Naive thymus-derived CD4-positive, alpha-beta T cell (primary cell): ENCODE measurements at regions of chr1 and their contacts with region 1.

Region 1: DNA sequence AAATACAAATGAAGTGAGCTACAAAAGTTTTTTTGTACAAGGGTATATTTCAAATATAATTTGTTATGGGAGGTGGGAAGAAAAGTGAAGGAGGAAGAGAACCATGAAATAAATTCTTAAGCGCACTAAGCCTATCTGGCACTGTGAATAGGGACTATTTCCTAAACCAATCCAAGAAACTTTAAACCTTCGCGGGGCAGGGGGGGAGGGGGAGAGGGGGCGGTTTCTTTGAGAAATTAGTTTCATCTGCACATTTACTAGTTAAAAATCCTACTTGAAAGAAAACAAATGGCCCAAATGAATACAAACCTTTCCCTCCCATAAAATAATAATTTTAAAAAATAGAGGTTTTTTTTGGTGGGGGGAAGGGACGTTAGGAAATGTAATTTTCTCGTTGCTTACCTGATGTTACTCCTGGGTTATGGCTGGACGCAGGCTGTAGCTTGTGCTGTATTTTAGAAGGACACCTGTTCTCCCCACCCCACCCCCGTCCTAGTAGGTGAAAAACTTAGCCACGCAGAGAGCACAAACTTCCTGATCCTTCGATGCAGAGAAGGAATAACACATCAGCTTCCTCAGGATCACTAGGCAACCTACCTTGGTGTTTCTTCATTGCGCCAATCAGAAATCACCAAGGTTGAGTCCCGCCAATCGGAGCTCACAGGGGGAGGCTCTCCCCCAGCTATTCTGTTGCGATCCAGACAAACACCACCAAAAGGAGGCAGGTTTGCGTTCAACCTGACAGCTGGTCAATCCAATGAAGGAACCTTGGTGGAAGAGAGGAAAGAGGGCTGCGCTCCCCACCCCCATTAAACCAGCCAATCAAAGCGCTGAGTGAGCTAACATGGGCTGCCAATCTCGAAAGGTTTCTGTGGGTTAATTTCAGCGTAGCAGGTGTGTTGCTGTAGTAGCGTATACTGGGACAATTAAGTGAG is at the start of gene GOLPH3L:
- DNase-seq: peak; percentile 46 to 95 (median 92)
- ATAC-seq: peak; percentile 100
- H3K4me3 ChIP-seq: peak within 1 kb of the TSS; percentile 73
- H3K4me3 Mint-ChIP-seq: peak within 1 kb of the TSS; percentile 91 to 100 (median 98)
- H3K27ac ChIP-seq: peak within 1 kb of the TSS; percentile 82
- H3K27ac Mint-ChIP-seq: peak within 1 kb of the TSS; percentile 81 to 99 (median 95)
- H3K4me1 ChIP-seq: peaks cover 4 to 11% of the 10 kb centered on the region in 2 donors
- H3K4me1 Mint-ChIP-seq: peaks cover 13 to 49% (median 42%) of the 10 kb centered on the region in 7 donors
- H3K27me3 ChIP-seq: no peaks in the 10 kb centered on the region
- H3K27me3 Mint-ChIP-seq: peaks cover 0 to 12% (median 0%) of the 10 kb centered on the region in 5 donors
- total RNA-seq, gene GOLPH3L: 8.7 to 32.1 (median 23.6) TPM

Region 2: GRCh38 chr1:150293433-150294168 is 403.3 kb before region 1 on chr1 and contains the start of gene MRPS21:
- CTCF ChIA-PET with region 1: no interaction called
- POLR2A ChIA-PET with region 1: no interaction called
- intact Hi-C with region 1: loop called in 1 of 2 experiments (anchors 1 kb)
- DNase-seq: peak; percentile 64 to 88 (median 83)
- ATAC-seq: peak; percentile 99
- H3K4me3 ChIP-seq: peak within 1 kb of the TSS; percentile 76
- H3K4me3 Mint-ChIP-seq: peak within 1 kb of the TSS; percentile 85 to 97 (median 92)
- H3K27ac ChIP-seq: peak within 1 kb of the TSS; percentile 92
- H3K27ac Mint-ChIP-seq: peak within 1 kb of the TSS; percentile 92 to 100 (median 98)
- H3K4me1 ChIP-seq: peaks cover 10 to 14% of the 10 kb centered on the region in 2 donors
- H3K4me1 Mint-ChIP-seq: peaks cover 20 to 45% (median 32%) of the 10 kb centered on the region in 7 donors
- H3K27me3 ChIP-seq: no peaks in the 10 kb centered on the region
- H3K27me3 Mint-ChIP-seq: no peaks in the 10 kb centered on the region
- total RNA-seq, gene MRPS21: 47.9 to 72.8 (median 67.5) TPM

Region 3: DNA sequence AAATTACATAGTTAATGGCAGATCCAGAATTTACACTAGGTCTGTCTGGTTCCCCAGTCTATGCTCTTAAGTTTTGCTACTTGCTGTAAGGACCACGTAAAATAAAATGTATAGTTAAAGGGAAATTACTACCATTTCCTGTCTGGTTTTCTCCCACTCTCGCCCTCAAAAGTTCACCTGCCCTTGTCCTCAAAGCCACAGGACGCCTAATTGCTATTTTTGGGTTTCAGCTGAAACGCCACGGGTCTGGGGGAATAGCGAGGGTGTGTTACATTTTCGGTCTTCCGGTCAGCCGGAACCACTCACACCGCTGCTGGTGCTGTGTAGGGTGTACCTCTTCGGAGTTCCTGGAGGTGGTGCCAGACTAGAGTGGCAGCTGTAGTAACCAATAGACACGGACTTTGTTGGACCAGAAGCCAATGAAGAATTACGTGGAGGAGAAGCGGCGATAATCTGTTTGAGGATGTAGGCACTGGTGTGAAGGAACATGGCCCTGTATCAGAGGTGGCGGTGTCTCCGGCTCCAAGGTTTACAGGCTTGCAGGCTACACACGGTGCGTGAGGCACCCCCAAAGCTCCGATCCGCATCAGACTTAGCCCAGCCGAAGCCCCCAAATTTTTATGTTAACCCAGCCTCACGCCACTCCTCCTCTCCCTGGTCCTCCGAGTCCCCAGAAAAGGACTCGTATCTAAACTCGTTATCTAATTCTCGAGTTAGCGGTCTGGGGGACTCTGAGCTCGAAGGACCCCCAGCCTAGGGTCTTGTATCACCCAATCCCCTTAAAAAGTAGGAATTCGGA is 209.7 kb before region 1 on chr1 and contains the start of gene TARS2:
- CTCF ChIA-PET with region 1: no interaction called
- POLR2A ChIA-PET with region 1: no interaction called
- intact Hi-C with region 1: loop called in 1 of 2 experiments (anchors 1 kb)
- DNase-seq: peak; percentile 71 to 97 (median 95)
- ATAC-seq: peak; percentile 100
- H3K4me3 ChIP-seq: peak within 1 kb of the TSS; percentile 95
- H3K4me3 Mint-ChIP-seq: peak within 1 kb of the TSS; percentile 91 to 100 (median 96)
- H3K27ac ChIP-seq: peak within 1 kb of the TSS; percentile 83
- H3K27ac Mint-ChIP-seq: peak within 1 kb of the TSS; percentile 92 to 100 (median 99)
- H3K4me1 ChIP-seq: peaks cover 4 to 8% of the 10 kb centered on the region in 2 donors
- H3K4me1 Mint-ChIP-seq: peaks cover 5 to 28% (median 20%) of the 10 kb centered on the region in 7 donors
- H3K27me3 ChIP-seq: no peaks in the 10 kb centered on the region
- H3K27me3 Mint-ChIP-seq: no peaks in the 10 kb centered on the region
- total RNA-seq, gene TARS2: 30.3 to 39.0 (median 36.4) TPM

Region 4: GRCh38 chr1:150765296-150765976 is 68.6 kb after region 1 on chr1 and contains the start of gene CTSS:
- CTCF ChIA-PET with region 1: no interaction called
- POLR2A ChIA-PET with region 1: interaction called, 14 read pairs
- intact Hi-C with region 1: loop called (anchors 2 to 5 kb)
- DNase-seq: peak in 6 of 9 donors; percentile 37 to 55 (median 43)
- ATAC-seq: peak; percentile 86
- H3K4me3 ChIP-seq: peak within 1 kb of the TSS; percentile 60
- H3K4me3 Mint-ChIP-seq: peak within 1 kb of the TSS; percentile 87 to 98 (median 93)
- H3K27ac ChIP-seq: peak within 1 kb of the TSS; percentile 82
- H3K27ac Mint-ChIP-seq: peak within 1 kb of the TSS; percentile 83 to 99 (median 96)
- H3K4me1 ChIP-seq: peaks cover 9 to 15% of the 10 kb centered on the region in 2 donors
- H3K4me1 Mint-ChIP-seq: peaks cover 36 to 68% (median 52%) of the 10 kb centered on the region in 7 donors
- H3K27me3 ChIP-seq: no peaks in the 10 kb centered on the region
- H3K27me3 Mint-ChIP-seq: peaks cover 0 to 8% (median 0%) of the 10 kb centered on the region in 5 donors
- total RNA-seq, gene CTSS: 91.1 to 1,020 (median 106) TPM

Region 5: GRCh38 chr1:150876119-150876454 is 179.2 kb after region 1 on chr1:
- CTCF ChIA-PET with region 1: no interaction called
- POLR2A ChIA-PET with region 1: no interaction called
- intact Hi-C with region 1: loop called (anchors 1 kb)
- DNase-seq: no peak
- ATAC-seq: peak; percentile 50
- H3K4me3 ChIP-seq: peak overlapping the region; percentile 68
- H3K4me3 Mint-ChIP-seq: peak overlapping the region; percentile 87 to 96 (median 95)
- H3K27ac ChIP-seq: peak overlapping the region; percentile 83
- H3K27ac Mint-ChIP-seq: peak overlapping the region; percentile 89 to 97 (median 94)
- H3K4me1 ChIP-seq: peaks cover 0 to 19% of the 10 kb centered on the region in 2 donors
- H3K4me1 Mint-ChIP-seq: peaks cover 13 to 45% (median 37%) of the 10 kb centered on the region in 7 donors
- H3K27me3 ChIP-seq: no peaks in the 10 kb centered on the region
- H3K27me3 Mint-ChIP-seq: no peaks in the 10 kb centered on the region

Region 6: DNA sequence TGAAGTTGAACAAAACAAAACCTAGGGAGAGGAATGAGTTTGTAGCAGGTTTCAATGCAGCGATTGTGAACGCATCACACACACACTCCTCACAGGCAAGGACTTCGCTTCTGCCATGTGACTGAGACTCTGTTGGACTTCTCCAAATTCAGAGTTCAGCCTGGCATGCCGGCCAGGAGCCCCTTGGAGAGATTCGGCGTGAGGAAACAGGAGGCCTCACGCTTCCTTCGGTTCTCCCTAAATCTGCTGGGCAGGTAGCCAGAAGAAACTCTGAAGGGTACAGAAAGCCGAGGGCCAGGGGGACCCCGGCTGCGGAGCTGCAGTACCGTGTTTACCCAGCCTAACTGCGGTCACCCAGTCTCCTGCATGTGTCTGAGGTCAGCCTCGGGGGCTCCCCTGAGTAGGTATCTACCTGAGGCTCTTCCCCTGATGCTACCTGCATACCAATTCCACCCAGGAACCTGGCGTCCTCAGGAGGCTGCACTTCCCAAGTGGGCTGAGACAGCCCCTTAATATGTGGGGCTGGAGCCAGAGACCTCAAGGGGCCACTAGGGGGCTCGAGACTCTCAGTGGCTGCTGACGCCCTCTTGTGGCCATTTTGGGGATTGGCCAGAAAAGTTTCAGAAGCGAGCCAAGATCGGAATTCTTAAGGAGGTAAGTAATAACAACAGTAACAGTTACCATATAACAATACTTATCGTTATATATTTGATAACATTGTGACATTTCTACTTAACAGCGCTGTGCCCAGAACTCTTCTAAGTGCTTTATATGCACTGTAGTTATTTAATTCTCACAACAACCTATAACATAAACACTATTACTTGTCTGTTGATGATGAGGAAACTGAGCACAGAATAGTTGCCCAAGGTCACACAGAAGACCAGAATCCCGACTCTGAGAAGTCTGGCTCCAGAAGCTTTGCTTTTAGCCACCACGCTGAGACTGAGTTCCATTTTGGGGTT is 282.5 kb after region 1 on chr1:
- CTCF ChIA-PET with region 1: no interaction called
- POLR2A ChIA-PET with region 1: no interaction called
- intact Hi-C with region 1: loop called in 1 of 2 experiments (anchors 5 kb)
- DNase-seq: peak; percentile 68 to 93 (median 84)
- ATAC-seq: peak; percentile 81
- H3K4me3 ChIP-seq: peak overlapping the region; percentile 39
- H3K4me3 Mint-ChIP-seq: peak overlapping the region in 9 of 10 donors; percentile 39 to 73 (median 61)
- H3K27ac ChIP-seq: peak overlapping the region; percentile 67
- H3K27ac Mint-ChIP-seq: peak overlapping the region; percentile 9 to 83 (median 62)
- H3K4me1 ChIP-seq: peaks cover 24 to 34% of the 10 kb centered on the region in 2 donors
- H3K4me1 Mint-ChIP-seq: peaks cover 14 to 44% (median 37%) of the 10 kb centered on the region in 7 donors
- H3K27me3 ChIP-seq: no peaks in the 10 kb centered on the region
- H3K27me3 Mint-ChIP-seq: no peaks in the 10 kb centered on the region

Region 7: DNA sequence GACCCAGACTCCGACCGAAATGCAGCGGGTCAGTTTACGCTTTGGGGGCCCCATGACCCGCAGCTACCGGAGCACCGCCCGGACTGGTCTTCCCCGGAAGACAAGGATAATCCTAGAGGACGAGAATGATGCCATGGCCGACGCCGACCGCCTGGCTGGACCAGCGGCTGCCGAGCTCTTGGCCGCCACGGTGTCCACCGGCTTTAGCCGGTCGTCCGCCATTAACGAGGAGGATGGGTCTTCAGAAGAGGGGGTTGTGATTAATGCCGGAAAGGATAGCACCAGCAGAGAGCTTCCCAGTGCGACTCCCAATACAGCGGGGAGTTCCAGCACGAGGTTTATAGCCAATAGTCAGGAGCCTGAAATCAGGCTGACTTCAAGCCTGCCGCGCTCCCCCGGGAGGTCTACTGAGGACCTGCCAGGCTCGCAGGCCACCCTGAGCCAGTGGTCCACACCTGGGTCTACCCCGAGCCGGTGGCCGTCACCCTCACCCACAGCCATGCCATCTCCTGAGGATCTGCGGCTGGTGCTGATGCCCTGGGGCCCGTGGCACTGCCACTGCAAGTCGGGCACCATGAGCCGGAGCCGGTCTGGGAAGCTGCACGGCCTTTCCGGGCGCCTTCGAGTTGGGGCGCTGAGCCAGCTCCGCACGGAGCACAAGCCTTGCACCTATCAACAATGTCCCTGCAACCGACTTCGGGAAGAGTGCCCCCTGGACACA is 351.2 kb after region 1 on chr1:
- CTCF ChIA-PET with region 1: no interaction called
- POLR2A ChIA-PET with region 1: no interaction called
- intact Hi-C with region 1: no loop called
- DNase-seq: peak; percentile 43 to 64 (median 55)
- ATAC-seq: peak; percentile 86
- H3K4me3 ChIP-seq: peak overlapping the region; percentile 73
- H3K4me3 Mint-ChIP-seq: peak overlapping the region; percentile 85 to 91 (median 90)
- H3K27ac ChIP-seq: peak overlapping the region; percentile 81
- H3K27ac Mint-ChIP-seq: peak overlapping the region; percentile 66 to 96 (median 93)
- H3K4me1 ChIP-seq: peaks cover 15 to 37% of the 10 kb centered on the region in 2 donors
- H3K4me1 Mint-ChIP-seq: peaks cover 37 to 89% (median 71%) of the 10 kb centered on the region in 7 donors
- H3K27me3 ChIP-seq: no peaks in the 10 kb centered on the region
- H3K27me3 Mint-ChIP-seq: no peaks in the 10 kb centered on the region